ENCODE measurements at regions of chr6 and their contacts with region 1.

Region 1: DNA sequence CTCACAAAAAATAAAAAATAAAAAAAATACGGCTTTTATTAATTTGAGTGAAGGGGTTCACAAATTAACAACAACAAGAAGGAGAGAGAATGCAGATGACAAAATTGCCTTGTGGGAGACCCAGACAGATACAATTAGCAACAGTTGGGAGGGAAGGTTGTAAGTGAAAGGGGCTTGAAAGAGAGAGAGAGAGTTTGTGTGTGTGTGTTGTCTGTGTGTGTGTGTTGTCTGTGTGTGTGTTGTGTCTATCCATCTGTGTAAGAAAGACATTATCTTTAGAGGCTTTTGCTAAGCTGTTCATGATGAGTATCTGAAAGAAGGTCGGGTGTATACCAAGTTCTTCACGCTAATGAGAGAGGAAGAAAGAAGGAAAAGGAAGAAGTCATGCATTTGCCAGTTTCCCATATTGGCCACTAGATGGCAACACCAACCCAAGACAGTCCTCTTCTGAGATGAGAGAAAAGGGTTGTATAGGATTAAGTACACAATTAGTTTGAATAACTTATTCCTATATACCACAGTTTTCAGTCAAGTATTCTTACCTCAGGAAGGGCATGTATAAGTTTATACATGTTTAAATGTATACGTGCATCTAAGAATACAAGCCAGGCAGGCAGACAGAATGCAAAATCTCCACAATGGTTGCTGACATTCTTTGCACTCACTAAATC is 63.7 kb upstream of the CD2AP start:
- DNase-seq: peak; percentile 9
- H3K4me3 Mint-ChIP-seq: peak overlapping the region; percentile 77
- H3K27ac Mint-ChIP-seq: peak overlapping the region; percentile 62
- H3K4me1 Mint-ChIP-seq: peaks cover 20% of the 10 kb centered on the region
- H3K27me3 Mint-ChIP-seq: peaks cover 19% of the 10 kb centered on the region

Region 2: DNA sequence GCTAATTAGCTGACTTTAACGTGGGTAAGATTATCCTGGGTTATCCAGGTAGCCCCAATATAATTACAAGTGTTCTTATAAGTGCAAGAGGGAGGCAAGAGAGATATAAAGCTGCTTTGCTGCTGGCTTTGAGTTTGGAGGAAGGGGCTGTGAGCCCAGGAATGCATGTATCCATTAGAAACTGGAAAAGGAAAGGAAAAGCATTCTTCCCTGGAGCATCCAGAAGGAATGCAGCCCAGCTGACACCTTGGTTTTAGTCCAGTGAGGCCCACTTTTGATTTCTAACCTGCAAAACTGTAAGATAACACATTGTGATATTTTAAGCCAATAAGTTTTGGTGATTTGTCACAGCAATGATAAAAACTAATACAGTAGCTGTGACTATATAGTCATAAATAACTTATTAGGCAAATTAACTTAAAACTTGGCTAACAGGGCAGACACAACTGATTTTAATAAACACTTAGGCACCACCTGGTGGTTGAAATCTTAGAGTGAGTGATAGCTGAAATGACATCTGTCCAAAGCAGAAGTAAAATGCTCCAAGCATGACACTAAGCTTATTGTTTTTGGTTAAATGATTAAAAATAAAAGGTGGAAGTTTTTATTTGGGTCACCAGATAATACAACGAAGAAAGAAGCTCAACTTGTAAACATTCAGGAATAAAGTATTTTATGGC is 320.1 kb after region 1 on chr6:
- intact Hi-C with region 1: loop called (anchors 1 kb)
- DNase-seq: no peak
- H3K4me3 Mint-ChIP-seq: no peak overlapping the region
- H3K27ac Mint-ChIP-seq: no peak overlapping the region
- H3K4me1 Mint-ChIP-seq: no peaks in the 10 kb centered on the region
- H3K27me3 Mint-ChIP-seq: peaks cover 11% of the 10 kb centered on the region

Region 3: GRCh38 chr6:47780510-47781356 is 366.8 kb after region 1 on chr6:
- intact Hi-C with region 1: loop called (anchors 1 kb)
- DNase-seq: peak; percentile 13
- H3K4me3 Mint-ChIP-seq: no peak overlapping the region
- H3K27ac Mint-ChIP-seq: no peak overlapping the region
- H3K4me1 Mint-ChIP-seq: no peaks in the 10 kb centered on the region
- H3K27me3 Mint-ChIP-seq: peaks cover 14% of the 10 kb centered on the region